ENCODE measurements at regions of chr4 and their contacts with region 1.

Region 1: GRCh38 chr4:40736910-40737309 is 12.8 kb upstream of the NSUN7 start:
- DNase-seq: peak in 1 of 14 experiments; percentile 19
- ATAC-seq: no peak
- H3K4me3 ChIP-seq: no peak overlapping the region
- H3K4me3 Mint-ChIP-seq: no peak overlapping the region
- H3K27ac ChIP-seq: no peak overlapping the region
- H3K27ac Mint-ChIP-seq: no peak overlapping the region
- H3K4me1 ChIP-seq: no peaks in the 10 kb centered on the region
- H3K4me1 Mint-ChIP-seq: no peaks in the 10 kb centered on the region
- H3K27me3 ChIP-seq: peaks cover 0 to 3% of the 10 kb centered on the region in 2 experiments
- H3K27me3 Mint-ChIP-seq: peaks cover 6% of the 10 kb centered on the region
- CTCF ChIP-seq: no peak

Region 2: DNA sequence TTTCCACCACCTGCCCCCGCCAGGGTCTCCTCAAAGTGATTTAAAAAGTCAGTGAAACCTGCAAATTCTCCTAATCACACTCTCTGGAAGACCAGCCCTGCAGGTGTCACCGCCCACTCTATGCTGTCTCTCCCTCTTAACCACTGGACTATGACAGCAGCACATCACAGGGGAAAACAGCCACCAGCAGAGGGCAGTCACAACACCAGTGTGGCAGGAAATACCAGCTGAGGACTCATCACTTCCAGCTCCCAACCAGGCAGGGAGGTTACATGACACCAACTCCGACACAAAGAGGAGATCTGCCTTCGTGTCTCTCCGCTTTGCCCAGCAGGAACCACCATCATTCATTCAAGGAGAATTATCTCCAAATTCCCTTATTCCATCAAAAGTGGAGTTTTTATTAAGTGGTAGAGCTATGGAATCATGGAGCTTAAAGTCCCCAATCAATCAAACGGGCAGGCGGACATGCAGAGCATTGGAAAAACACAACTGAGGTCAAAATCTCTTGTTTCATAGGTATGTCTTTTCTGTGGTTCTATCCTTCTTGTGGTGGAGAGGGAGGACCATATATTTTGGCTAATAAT is 104.2 kb after region 1 on chr4:
- CTCF ChIA-PET with region 1: no interaction called
- POLR2A ChIA-PET with region 1: no interaction called
- intact Hi-C with region 1: loop called in 1 of 2 experiments (anchors 5 kb)
- DNase-seq: peak; percentile 44 to 74 (median 56)
- ATAC-seq: peak; percentile 72
- H3K4me3 ChIP-seq: no peak overlapping the region
- H3K4me3 Mint-ChIP-seq: no peak overlapping the region
- H3K27ac ChIP-seq: no peak overlapping the region
- H3K27ac Mint-ChIP-seq: no peak overlapping the region
- H3K4me1 ChIP-seq: no peaks in the 10 kb centered on the region
- H3K4me1 Mint-ChIP-seq: no peaks in the 10 kb centered on the region
- H3K27me3 ChIP-seq: no peaks in the 10 kb centered on the region
- H3K27me3 Mint-ChIP-seq: no peaks in the 10 kb centered on the region
- CTCF ChIP-seq: peak; percentile 62

Region 3: DNA sequence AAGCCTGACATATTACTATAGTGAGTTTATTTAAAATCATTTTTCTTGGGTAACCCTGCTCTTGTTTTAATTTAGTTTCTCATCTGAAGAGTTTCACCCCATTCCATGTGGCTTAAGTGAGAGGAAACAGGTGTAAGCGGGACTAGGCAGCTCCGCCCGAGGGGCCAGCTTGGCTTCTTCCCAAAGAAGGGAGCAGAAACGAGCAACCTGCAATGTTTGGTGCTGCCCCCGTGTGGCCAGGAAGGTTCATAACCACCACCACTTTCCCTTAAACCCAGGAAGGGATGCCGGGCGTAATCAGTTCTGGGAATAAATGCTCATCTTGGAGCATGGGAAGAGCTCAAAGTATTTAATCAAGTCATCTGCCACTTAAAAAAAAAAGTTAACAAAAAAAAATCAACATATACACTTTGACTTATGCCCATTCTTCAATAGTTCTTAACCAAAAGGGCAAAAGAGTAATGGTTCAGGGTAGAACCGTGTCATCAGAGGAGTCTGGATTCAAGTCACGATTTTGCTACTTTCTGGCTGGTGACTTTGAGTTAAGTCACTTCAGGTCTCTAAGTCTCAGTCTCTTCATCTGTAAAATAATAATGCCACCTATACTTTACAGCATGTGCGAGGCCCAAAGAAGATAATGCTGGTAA is 160.8 kb after region 1 on chr4:
- CTCF ChIA-PET with region 1: no interaction called
- POLR2A ChIA-PET with region 1: no interaction called
- intact Hi-C with region 1: loop called (anchors 5 to 10 kb)
- DNase-seq: peak; percentile 27 to 76 (median 48)
- ATAC-seq: peak; percentile 44
- H3K4me3 ChIP-seq: no peak overlapping the region
- H3K4me3 Mint-ChIP-seq: peak overlapping the region; percentile 66
- H3K27ac ChIP-seq: no peak overlapping the region
- H3K27ac Mint-ChIP-seq: no peak overlapping the region
- H3K4me1 ChIP-seq: no peaks in the 10 kb centered on the region
- H3K4me1 Mint-ChIP-seq: peaks cover 6% of the 10 kb centered on the region
- H3K27me3 ChIP-seq: no peaks in the 10 kb centered on the region
- H3K27me3 Mint-ChIP-seq: no peaks in the 10 kb centered on the region
- CTCF ChIP-seq: peak; percentile 90

Region 4: GRCh38 chr4:41873380-41874295 is 1136.7 kb after region 1 on chr4:
- CTCF ChIA-PET with region 1: no interaction called
- POLR2A ChIA-PET with region 1: no interaction called
- intact Hi-C with region 1: no loop called
- DNase-seq: no peak
- ATAC-seq: no peak
- H3K4me3 ChIP-seq: no peak overlapping the region
- H3K4me3 Mint-ChIP-seq: no peak overlapping the region
- H3K27ac ChIP-seq: no peak overlapping the region
- H3K27ac Mint-ChIP-seq: no peak overlapping the region
- H3K4me1 ChIP-seq: peaks cover 3% of the 10 kb centered on the region
- H3K4me1 Mint-ChIP-seq: peaks cover 7% of the 10 kb centered on the region
- H3K27me3 ChIP-seq: peaks cover 55 to 92% of the 10 kb centered on the region in 2 experiments
- H3K27me3 Mint-ChIP-seq: peaks cover 99% of the 10 kb centered on the region
- CTCF ChIP-seq: no peak

Measured in CD4-positive, alpha-beta T cell (primary cell).